Calu3 (cell line): ENCODE measurements at regions of chr15 and their contacts with region 1.

Region 1: DNA sequence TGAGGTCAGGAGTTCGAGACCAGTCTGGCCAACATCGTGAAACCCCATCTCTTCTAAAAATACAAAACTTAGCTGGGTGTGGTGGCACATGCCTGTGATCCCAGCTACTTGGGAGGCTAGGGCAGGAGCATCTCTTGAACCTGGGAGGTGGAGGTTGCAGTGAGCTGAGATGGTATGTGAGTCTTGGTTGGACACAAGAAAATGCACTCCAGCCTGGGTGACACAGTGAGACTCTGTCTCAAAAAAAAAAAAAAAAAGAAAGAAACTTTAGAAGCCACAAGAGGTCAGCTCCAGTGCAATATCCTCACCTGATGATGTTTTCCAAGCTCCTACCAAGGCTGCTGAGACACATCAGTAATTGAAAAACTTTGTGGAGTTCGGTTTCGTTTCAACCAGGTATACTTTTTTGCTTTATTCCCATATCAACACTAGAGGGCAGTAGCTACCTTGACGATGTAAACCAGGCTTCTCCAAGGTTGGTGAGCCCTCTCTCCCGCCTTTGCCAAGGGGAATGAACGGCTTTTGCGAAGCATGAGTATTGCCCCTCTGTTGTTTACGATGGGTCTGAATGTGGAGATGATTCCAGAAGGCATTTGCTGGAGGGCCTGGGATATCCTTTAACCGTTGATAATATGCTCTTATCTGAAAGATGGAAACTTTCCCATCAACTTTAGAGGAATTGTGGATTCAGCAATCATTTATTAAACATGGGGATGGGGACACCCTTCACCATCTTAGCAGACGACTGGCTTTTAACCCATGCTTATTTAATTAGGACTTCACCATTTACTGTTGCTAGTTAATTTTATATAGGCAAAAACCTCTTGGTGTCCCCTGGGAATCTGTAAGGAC is 202.8 kb downstream of the SV2B start:
- DNase-seq: peak; percentile 56
- H3K4me3 Mint-ChIP-seq: no peak overlapping the region
- H3K27ac Mint-ChIP-seq: no peak overlapping the region
- H3K4me1 Mint-ChIP-seq: no peaks in the 10 kb centered on the region
- H3K27me3 Mint-ChIP-seq: peaks cover 24% of the 10 kb centered on the region
- CTCF ChIP-seq: peak; percentile 68

Region 2: DNA sequence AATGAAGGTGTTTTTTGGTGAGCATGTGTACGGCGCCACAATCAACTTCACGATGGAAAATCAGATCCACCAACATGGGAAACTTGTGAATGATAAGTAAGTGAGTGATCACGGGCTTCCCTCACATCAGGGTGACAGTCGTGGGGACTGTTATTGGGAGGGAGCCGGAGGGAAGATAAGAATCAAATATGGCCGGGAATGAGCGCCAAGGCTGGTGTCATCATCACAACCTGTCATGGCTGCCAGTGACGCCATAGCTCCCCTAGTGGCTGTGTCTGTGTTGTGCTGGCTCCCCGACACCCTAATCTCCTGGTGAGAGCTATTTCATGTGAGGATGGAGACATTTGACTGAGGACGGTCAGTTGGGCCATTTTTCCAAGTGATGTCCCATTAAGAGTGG is 34.3 kb before region 1 on chr15:
- CTCF ChIA-PET with region 1: no interaction called
- intact Hi-C with region 1: no loop called
- DNase-seq: no peak
- H3K4me3 Mint-ChIP-seq: no peak overlapping the region
- H3K27ac Mint-ChIP-seq: no peak overlapping the region
- H3K4me1 Mint-ChIP-seq: no peaks in the 10 kb centered on the region
- H3K27me3 Mint-ChIP-seq: peaks cover 71% of the 10 kb centered on the region
- CTCF ChIP-seq: no peak

Region 3: GRCh38 chr15:91456251-91456738 is 153.5 kb after region 1 on chr15:
- CTCF ChIA-PET with region 1: interaction called, 5 read pairs
- intact Hi-C with region 1: loop called (anchors 2 kb)
- DNase-seq: peak; percentile 88
- H3K4me3 Mint-ChIP-seq: peak overlapping the region; percentile 59
- H3K27ac Mint-ChIP-seq: peak overlapping the region; percentile 92
- H3K4me1 Mint-ChIP-seq: peaks cover 44% of the 10 kb centered on the region
- H3K27me3 Mint-ChIP-seq: no peaks in the 10 kb centered on the region
- CTCF ChIP-seq: no peak

Region 4: DNA sequence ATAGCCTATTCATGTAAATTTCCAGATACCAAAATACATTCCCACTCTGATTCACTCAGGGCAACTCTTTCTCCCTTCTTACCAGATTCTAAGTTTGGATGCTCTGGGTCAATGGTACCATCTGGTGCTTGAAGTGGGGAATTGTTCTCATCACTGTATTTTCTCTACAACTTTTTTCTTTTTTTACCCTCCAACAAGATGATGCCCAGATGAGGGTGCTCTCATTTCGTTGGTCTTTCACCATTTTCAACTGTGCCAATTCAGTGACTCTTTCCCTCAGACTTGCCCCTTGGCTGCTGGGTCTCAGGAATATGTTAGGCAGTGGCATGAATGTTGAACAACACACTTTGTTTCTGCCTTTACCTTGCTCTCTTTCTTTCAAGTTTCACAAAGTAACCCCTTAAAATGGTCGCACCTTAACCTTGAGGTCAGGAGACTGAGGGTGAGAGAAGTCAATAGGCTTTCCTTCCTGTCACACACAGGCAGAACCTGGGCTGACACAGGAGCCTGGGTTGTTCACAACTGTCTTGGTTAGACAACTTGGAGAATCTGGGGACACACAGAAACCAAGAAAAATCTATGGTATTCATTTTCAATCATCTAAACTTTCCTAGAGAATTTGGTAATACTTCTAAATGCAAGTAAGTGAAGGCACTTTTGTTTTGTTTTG is 220.0 kb after region 1 on chr15:
- CTCF ChIA-PET with region 1: interaction called, 6 read pairs
- intact Hi-C with region 1: loop called (anchors 1 kb)
- DNase-seq: peak; percentile 25
- H3K4me3 Mint-ChIP-seq: no peak overlapping the region
- H3K27ac Mint-ChIP-seq: no peak overlapping the region
- H3K4me1 Mint-ChIP-seq: peaks cover 20% of the 10 kb centered on the region
- H3K27me3 Mint-ChIP-seq: no peaks in the 10 kb centered on the region
- CTCF ChIP-seq: peak; percentile 29

Region 5: GRCh38 chr15:91589356-91589755 is 286.5 kb after region 1 on chr15:
- CTCF ChIA-PET with region 1: no interaction called
- intact Hi-C with region 1: loop called (anchors 1 kb)
- DNase-seq: no peak
- H3K4me3 Mint-ChIP-seq: no peak overlapping the region
- H3K27ac Mint-ChIP-seq: no peak overlapping the region
- H3K4me1 Mint-ChIP-seq: no peaks in the 10 kb centered on the region
- H3K27me3 Mint-ChIP-seq: no peaks in the 10 kb centered on the region
- CTCF ChIP-seq: peak; percentile 12

Region 6: DNA sequence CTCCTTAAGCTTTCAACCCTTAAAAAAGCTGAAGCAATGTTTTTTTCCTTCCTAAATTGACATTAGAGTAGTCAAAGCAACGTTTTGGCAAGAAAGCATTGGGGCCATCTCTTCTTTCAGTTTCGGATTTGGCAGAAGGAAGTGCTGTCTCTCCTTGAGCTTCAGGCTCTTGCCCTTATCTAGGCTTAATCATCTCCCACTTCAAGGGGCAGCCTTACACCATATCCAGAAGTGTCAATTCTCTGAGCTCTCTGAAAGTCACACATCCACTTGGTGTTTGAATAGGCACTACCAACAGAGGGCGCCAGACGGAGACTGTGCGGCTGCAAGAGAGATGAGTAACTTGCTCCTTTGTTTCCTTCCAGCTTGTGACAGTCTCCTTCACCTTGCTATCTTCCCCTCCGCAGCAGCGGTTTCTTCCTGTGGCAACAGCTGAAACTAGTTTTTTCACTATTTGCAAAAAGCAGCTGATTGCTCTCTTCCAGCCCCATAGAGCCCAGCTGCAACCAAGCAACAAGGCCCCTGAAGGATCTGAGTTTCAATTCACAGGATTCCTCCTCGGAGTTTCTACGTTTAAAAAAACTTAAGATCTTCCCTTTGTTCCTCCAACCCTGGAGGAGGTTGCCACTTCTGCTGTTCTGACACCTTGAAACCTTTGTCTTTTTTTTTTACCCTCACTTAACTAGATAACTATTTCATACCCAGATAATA is 403.7 kb after region 1 on chr15:
- CTCF ChIA-PET with region 1: interaction called, 5 read pairs
- intact Hi-C with region 1: loop called (anchors 1 kb)
- DNase-seq: peak; percentile 85
- H3K4me3 Mint-ChIP-seq: no peak overlapping the region
- H3K27ac Mint-ChIP-seq: no peak overlapping the region
- H3K4me1 Mint-ChIP-seq: no peaks in the 10 kb centered on the region
- H3K27me3 Mint-ChIP-seq: no peaks in the 10 kb centered on the region
- CTCF ChIP-seq: peak; percentile 87

Region 7: GRCh38 chr15:91852741-91853510 is 550.1 kb after region 1 on chr15:
- CTCF ChIA-PET with region 1: interaction called, 3 read pairs
- intact Hi-C with region 1: loop called (anchors 2 kb)
- DNase-seq: peak; percentile 87
- H3K4me3 Mint-ChIP-seq: peak overlapping the region; percentile 84
- H3K27ac Mint-ChIP-seq: peak overlapping the region; percentile 78
- H3K4me1 Mint-ChIP-seq: peaks cover 45% of the 10 kb centered on the region
- H3K27me3 Mint-ChIP-seq: no peaks in the 10 kb centered on the region
- CTCF ChIP-seq: peak; percentile 95

Region 8: DNA sequence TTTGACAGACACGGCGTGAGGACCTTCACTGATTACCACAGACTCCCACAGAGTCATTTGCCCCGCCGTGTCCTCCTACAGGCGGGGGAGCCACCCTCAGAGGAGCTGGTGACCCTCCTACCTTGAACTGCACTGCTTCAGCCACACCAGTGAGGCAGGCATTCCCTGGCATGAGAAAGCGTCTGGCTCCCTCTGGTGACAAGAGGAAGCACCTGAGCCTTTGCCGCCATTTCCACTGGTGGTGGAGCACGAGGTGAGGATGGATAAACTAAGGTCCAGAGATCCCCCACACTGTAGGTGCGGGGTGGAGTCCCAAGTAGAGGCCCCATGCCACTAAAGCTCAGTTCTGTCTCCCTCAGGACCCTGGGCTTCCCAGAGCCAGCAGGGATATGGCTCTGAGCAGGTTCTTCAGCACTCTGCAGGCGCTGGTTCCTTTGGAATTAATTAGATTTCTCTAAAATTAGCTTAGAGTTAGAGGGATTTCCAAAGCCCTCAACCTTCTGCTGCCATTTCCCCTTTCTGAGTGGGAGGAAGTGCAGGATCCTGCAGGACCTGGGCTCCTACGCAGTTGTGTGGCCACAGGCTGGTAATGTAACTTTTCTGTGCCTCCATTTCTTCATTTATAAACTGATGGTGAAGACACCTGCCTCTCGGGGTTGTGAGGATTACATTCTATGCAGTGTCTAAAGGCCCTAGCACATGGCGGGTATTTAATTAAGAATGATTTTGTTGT is 774.7 kb after region 1 on chr15:
- CTCF ChIA-PET with region 1: interaction called, 5 read pairs
- intact Hi-C with region 1: loop called (anchors 2 kb)
- DNase-seq: peak; percentile 83
- H3K4me3 Mint-ChIP-seq: no peak overlapping the region
- H3K27ac Mint-ChIP-seq: no peak overlapping the region
- H3K4me1 Mint-ChIP-seq: peaks cover 35% of the 10 kb centered on the region
- H3K27me3 Mint-ChIP-seq: no peaks in the 10 kb centered on the region
- CTCF ChIP-seq: peak; percentile 77